Activated CD4-positive, alpha-beta memory T cell treated with anti-CD3 and anti-CD28 coated beads for 36 hours (primary cell): ENCODE measurements at regions of chr12 and their contacts with region 1.

Region 1: DNA sequence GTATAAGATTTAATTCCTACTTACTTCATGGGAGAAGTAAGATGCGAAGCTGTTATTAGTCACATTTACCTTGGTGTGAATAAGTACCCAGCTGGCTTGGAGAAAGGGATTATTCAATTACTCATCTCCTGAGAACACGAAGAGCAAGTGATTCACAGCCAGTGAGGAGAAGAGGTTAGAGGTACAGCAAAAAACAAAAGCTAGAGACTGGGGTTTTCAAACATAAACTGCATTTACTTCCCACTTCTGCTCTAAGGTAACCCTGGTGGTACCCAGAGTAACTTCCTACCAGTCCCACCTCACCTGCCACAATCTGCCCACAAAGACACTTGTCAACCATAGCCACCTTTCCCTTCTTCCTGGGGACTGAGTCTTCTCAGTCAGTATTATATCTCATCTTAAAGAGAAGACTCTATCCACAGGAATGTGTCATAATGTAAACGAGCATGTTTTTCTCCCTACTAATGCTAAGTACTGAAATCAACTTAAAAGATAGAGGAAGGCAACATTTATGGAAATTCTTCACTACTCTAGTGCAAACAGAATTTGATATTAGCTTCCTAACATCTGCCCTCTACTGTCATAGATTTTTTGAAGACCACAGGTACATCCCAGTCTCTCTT is 6.0 kb upstream of the IL22 start:
- DNase-seq: peak; percentile 71
- H3K4me3 Mint-ChIP-seq: no peak overlapping the region
- H3K27ac Mint-ChIP-seq: peak overlapping the region; percentile 24
- H3K4me1 Mint-ChIP-seq: peaks cover 27% of the 10 kb centered on the region
- H3K27me3 Mint-ChIP-seq: peaks cover 37% of the 10 kb centered on the region

Region 2: GRCh38 chr12:68080577-68080976 is 178.9 kb before region 1 on chr12:
- CTCF ChIA-PET with region 1: no interaction called
- POLR2A ChIA-PET with region 1: no interaction called
- intact Hi-C with region 1: no loop called
- DNase-seq: peak; percentile 44
- H3K4me3 Mint-ChIP-seq: no peak overlapping the region
- H3K27ac Mint-ChIP-seq: peak overlapping the region; percentile 43
- H3K4me1 Mint-ChIP-seq: peaks cover 17% of the 10 kb centered on the region
- H3K27me3 Mint-ChIP-seq: no peaks in the 10 kb centered on the region

Region 3: GRCh38 chr12:68240597-68241374 is 18.6 kb before region 1 on chr12:
- CTCF ChIA-PET with region 1: interaction called, 3 read pairs
- POLR2A ChIA-PET with region 1: no interaction called
- intact Hi-C with region 1: loop called (anchors 1 kb)
- DNase-seq: peak; percentile 72
- H3K4me3 Mint-ChIP-seq: no peak overlapping the region
- H3K27ac Mint-ChIP-seq: peak overlapping the region; percentile 13
- H3K4me1 Mint-ChIP-seq: peaks cover 46% of the 10 kb centered on the region
- H3K27me3 Mint-ChIP-seq: peaks cover 12% of the 10 kb centered on the region

Region 4: DNA sequence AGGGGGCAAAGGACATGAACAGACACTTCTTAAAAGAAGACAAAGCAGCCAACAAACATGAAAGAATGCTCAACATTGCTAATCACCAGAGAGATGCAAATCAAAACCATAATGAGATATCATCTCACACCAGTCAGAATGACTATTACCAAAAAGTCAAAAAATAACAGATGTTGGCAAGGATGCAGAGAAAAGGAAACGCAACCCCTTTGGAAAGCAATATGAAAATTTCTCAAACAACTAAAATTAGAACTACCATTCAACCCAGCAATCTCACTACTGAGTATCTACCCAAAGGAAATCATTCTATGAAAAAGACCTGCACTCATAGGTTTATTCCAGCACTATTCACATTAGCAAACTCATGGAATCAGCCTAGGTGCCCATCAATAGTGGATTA is 47.1 kb after region 1 on chr12:
- CTCF ChIA-PET with region 1: no interaction called
- POLR2A ChIA-PET with region 1: no interaction called
- intact Hi-C with region 1: loop called (anchors 2 kb)
- DNase-seq: no peak
- H3K4me3 Mint-ChIP-seq: no peak overlapping the region
- H3K27ac Mint-ChIP-seq: no peak overlapping the region
- H3K4me1 Mint-ChIP-seq: peaks cover 15% of the 10 kb centered on the region
- H3K27me3 Mint-ChIP-seq: no peaks in the 10 kb centered on the region